Activated CD4-positive, alpha-beta T cell treated with anti-CD3 and anti-CD28 coated beads for 36 hours (primary cell): ENCODE measurements at regions of chr13 and their contacts with region 1.

Region 1: DNA sequence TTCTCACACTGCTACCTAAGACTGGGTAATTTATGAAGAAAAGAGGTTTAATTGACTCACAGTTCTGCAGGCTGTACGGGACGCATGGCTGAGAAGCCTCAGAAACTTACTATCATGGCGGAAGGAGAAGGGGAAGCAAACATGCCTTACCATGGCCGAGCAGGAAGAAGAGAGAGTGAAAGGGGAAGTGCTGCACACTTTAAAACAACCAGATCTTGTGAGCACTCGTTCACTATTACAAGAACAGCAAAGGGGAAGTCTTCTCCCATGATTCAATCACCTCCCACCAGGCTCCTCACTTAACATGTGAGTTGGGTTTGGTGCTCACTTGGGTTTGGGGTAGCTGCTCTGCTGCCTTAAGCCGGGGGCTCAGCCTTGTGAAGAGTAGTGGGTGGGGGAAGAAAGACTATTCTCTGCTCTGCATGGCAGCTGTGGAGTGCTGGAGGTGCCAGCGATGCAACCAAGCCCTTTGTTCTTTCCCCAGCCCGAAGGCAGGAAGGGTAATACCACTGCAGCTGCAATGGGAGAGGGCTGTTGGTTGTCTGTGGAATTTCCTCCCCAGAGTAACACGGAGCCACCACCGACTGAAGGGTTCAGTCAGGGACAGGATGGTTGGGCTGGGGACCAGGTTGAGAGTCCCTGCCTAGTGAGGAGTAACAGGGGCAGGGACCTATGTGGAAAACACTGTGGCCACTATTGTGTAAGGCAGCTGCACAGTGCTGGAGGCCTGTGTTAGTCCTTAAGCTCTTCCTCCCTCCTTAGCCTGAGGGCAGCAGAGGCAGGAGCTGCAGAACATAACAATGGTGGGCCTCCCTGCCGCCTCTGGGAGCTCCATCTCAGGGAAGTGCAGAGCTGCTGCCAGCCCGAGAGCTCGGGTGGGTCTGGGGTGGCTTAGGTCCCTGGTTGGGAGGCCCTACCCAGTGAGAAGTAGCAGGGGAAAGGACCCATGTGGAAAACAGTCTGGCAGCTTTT is 1262.5 kb downstream of the EFNB2 start:
- DNase-seq: no peak
- ATAC-seq: no peak
- H3K4me3 Mint-ChIP-seq: no peak overlapping the region
- H3K27ac Mint-ChIP-seq: no peak overlapping the region
- H3K4me1 Mint-ChIP-seq: no peaks in the 10 kb centered on the region
- H3K27me3 Mint-ChIP-seq: peaks cover 2% of the 10 kb centered on the region

Region 2: DNA sequence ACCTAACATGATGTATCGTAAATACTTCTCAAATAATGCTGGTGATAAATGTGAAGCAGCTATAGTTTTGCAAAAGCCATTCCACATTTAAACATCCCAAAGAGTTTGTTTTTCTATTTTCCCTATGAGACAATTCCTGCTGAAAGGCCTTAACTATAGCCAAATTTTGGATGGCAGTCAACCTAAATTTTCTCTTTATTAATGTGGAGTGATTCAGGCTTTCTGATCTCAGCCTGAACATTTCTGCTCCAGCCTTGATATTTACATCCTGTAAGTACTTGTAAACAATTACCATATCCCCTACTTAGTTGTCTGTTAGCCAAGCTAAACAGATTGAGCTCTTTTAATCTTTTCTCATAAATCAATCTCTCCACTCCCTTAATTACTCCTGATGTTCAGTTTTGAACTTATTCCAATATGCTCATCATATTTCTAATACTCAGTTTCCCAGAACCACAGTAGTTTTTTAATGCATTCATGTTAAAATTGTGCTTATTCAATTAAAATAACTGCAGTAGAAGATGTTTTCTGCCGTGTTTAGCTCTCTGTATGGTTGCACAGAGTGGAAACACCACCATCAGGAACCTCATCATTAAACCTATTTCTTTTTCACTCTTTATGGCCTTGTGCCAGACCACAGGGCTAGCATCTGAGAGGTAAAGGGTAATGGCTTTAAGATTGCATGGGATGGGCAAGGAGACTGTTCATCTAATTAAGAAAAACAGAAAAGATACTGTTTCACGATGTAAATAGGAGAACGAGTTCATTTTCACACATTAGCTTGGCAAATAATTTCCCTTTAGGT is 971.6 kb before region 1 on chr13:
- CTCF ChIA-PET with region 1: no interaction called
- POLR2A ChIA-PET with region 1: interaction called, 11 read pairs
- intact Hi-C with region 1: no loop called
- DNase-seq: no peak
- ATAC-seq: no peak
- H3K4me3 Mint-ChIP-seq: no peak overlapping the region
- H3K27ac Mint-ChIP-seq: no peak overlapping the region
- H3K4me1 Mint-ChIP-seq: no peaks in the 10 kb centered on the region
- H3K27me3 Mint-ChIP-seq: no peaks in the 10 kb centered on the region